ENCODE measurements at regions of chr3 and their contacts with region 1.

Region 1: DNA sequence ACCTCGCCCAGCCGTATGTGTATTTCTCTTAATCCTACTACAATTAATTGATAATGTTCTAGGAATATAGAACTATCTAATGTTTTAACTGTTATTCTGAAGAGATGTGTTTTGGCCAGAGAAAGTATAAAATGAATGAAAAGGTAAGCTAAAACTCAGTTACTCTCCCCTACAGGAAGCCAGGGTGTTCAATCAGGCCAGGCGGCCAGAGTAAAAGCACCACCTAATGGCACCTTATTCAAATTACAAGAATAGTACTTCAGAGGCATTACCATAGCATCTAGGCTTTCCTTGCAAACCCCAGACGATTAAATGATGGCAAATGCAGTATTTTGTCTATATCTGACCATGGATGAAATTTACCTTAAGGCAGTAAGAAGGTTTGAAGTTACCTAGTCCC is 10.4 kb downstream of the SLC12A8 start:
- DNase-seq: no peak
- ATAC-seq: no peak
- H3K4me3 ChIP-seq: no peak overlapping the region
- H3K27ac ChIP-seq: no peak overlapping the region
- H3K4me1 ChIP-seq: no peaks in the 10 kb centered on the region
- H3K27me3 ChIP-seq: no peaks in the 10 kb centered on the region
- CTCF ChIP-seq: peak in 1 of 9 donors; percentile 22

Region 2: DNA sequence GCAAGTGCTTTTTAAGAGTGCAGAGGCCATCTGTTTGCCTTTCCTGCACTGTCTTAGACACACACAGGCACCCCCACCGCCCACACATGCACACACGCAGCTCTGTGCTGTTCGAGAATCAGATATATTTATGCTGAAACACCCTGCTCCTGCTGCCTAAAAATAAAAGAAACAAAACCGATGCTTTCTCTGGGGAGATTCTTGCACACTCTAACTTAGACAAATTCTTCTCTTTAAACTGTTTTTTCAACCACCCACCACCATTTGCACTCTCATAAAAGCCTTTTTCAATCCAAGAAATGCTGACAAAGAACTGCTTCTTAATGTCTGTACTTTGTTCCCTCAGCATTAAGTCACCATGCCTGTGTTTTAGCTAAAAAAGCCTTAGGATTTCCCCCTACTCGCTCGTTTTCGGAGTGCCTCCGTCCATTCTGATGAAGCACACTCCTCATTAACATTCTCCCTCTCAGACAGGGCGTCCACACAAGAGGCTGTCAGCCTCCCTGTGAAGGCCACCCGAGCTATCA is 15.9 kb before region 1 on chr3:
- intact Hi-C with region 1: loop called in 1 of 10 experiments (anchors 2 kb)
- DNase-seq: no peak
- ATAC-seq: peak in 4 of 8 donors; percentile 42 to 68 (median 56)
- H3K4me3 ChIP-seq: no peak overlapping the region
- H3K27ac ChIP-seq: no peak overlapping the region
- H3K4me1 ChIP-seq: peaks cover 0 to 13% (median 3%) of the 10 kb centered on the region in 9 donors
- H3K27me3 ChIP-seq: no peaks in the 10 kb centered on the region
- CTCF ChIP-seq: no peak

Region 3: GRCh38 chr3:125418306-125418705 is 216.1 kb after region 1 on chr3:
- intact Hi-C with region 1: loop called in 1 of 10 experiments (anchors 10 kb)
- DNase-seq: no peak
- ATAC-seq: no peak
- H3K4me3 ChIP-seq: no peak overlapping the region
- H3K27ac ChIP-seq: no peak overlapping the region
- H3K4me1 ChIP-seq: no peaks in the 10 kb centered on the region
- H3K27me3 ChIP-seq: no peaks in the 10 kb centered on the region
- CTCF ChIP-seq: no peak

Measured in heart right ventricle (tissue), 16 donors.